Activated naive CD4-positive, alpha-beta T cell treated with anti-CD3 and anti-CD28 coated beads, Interleukin-2, amount 10 ng/mL, durations not matched to agents 7 days and 5 days (primary cell): ENCODE measurements at regions of chr1 and their contacts with region 1.

Region 1: DNA sequence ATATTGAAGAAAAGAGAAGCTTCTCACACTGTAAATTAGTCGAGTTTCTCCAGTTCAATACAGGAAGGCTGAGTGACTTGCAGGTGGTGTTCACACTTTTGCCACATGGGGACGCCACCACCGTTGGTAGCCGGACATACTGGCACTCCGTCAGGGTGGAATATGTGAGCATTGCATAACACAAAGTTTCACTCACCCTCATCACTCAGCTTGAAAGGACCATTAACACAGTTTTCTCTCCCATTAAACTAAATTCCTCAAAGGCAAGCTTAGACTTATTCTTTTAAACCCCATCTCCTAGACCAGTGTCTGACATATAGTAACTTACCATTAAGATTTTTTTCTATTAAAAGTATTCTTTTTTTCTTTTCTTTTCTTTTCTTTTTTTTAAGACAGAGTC is 105.3 kb upstream of the SERBP1 start:
- DNase-seq: peak; percentile 66
- H3K4me3 Mint-ChIP-seq: no peak overlapping the region
- H3K27ac Mint-ChIP-seq: no peak overlapping the region
- H3K4me1 Mint-ChIP-seq: no peaks in the 10 kb centered on the region
- H3K27me3 Mint-ChIP-seq: peaks cover 6% of the 10 kb centered on the region

Region 2: DNA sequence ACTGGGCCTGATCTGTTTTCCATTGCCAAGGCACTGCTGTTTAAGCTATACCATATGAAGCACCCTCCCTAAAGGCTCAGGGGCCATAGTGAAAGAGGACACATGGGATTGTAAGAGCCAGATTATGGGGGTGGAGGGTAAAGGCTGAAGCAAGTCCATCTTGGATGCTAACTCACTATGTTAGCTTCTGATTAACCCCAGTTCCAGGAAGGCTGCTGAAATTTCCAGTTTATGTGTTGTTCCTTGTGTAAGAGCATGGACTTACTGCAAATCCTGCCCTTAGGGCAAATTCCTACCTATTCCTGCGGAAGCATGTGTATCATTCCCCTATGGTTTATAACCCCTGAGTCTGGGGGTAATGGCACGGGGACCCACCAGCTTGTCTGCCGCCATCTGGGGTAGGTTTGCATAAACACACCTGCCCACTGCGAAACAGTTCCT is 13.5 kb before region 1 on chr1:
- CTCF ChIA-PET with region 1: interaction called, 14 read pairs
- DNase-seq: no peak
- H3K4me3 Mint-ChIP-seq: no peak overlapping the region
- H3K27ac Mint-ChIP-seq: no peak overlapping the region
- H3K4me1 Mint-ChIP-seq: no peaks in the 10 kb centered on the region
- H3K27me3 Mint-ChIP-seq: peaks cover 27% of the 10 kb centered on the region

Region 3: DNA sequence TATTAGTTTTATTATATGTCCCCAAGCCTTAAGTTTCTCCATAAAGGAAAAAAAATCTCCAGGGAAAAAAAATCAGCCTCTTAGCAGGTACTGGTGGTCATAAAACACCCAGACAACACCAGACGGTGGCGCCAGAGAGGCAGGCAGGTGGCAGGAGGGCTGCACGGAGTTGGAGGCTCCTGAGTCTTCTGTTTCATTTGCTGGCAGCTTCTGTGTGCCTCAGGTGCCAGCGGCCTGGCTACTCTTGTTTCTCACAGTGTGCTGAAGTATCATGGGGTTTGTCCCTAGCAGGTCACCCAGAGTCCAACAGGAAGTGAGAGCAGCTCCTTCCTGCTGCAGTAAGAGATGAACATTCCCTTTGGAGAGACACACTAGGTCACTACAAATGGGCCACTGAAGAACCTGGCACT is 26.2 kb after region 1 on chr1:
- CTCF ChIA-PET with region 1: interaction called, 17 read pairs
- DNase-seq: peak; percentile 91
- H3K4me3 Mint-ChIP-seq: no peak overlapping the region
- H3K27ac Mint-ChIP-seq: no peak overlapping the region
- H3K4me1 Mint-ChIP-seq: no peaks in the 10 kb centered on the region
- H3K27me3 Mint-ChIP-seq: peaks cover 14% of the 10 kb centered on the region